ENCODE measurements at regions of chr3 and their contacts with region 1.

Region 1: DNA sequence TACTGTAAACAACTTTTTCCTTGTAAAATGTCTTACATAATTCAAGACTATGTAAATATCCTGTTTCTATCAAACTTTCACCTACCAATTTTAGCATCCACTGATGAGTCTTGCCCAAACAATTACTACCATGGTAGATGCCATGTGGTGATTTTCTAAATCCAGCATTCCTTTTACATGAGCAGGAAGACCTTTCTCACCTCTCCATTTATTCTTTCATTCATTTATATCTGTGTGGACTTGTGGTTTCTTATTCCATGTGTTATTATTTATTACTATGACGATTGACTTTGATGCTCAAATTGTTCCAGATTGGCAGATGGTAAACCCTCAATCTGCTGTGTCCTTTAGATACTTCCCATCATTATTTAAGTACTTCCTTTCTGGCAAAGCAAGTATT is 62.4 kb downstream of the IFT57 start:
- DNase-seq: peak; percentile 49
- H3K4me3 ChIP-seq: no peak overlapping the region
- H3K27ac ChIP-seq: no peak overlapping the region
- H3K4me1 ChIP-seq: peaks cover 26% of the 10 kb centered on the region
- H3K27me3 ChIP-seq: no peaks in the 10 kb centered on the region
- CTCF ChIP-seq: no peak
- POLR2A ChIP-seq: no peak

Region 2: GRCh38 chr3:108221911-108222852 is 62.3 kb after region 1 on chr3 and contains the start of gene IFT57:
- CTCF ChIA-PET with region 1: interaction called, 3 read pairs
- POLR2A ChIA-PET with region 1: no interaction called
- dilution Hi-C with region 1: no loop called
- intact Hi-C with region 1: loop called (anchors 1 kb)
- DNase-seq: peak; percentile 99
- H3K4me3 ChIP-seq: peak within 1 kb of the TSS; percentile 66 to 87 (median 82)
- H3K27ac ChIP-seq: peak within 1 kb of the TSS; percentile 68
- H3K4me1 ChIP-seq: peaks cover 21% of the 10 kb centered on the region
- H3K27me3 ChIP-seq: no peaks in the 10 kb centered on the region
- CTCF ChIP-seq: no peak
- POLR2A ChIP-seq: peak; percentile 36
- total RNA-seq, gene IFT57: 23.4 and 25.1 TPM in 2 replicates

Region 3: DNA sequence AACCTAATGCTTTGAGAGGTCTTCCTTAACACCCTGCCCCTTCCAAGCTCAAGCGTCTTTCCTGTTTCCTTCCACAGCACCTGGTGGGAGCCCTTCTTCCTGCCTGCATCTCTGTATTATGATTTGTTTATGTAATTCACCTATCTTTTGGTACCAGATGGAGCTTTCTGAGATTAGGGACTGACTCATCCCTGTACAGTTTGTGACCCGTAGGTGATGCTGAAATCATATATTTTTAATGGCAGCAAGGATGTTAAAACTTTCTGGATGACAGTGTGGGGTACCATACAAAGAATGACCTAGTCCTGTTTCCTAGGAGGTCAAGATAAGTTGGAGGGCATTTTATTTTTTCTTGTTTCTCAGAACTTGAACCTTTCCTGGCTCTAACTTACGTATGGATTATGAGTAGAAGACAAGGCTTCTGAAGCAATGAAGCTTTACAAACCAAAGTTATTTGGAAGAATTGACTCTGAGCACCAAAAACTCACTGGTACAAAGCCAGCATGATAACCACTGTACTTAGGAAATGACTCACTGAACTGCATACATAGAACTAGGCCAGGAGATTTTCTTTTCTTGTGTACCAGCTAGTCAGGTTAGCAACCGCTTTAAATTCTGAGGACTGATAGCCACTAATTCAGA is 183.1 kb after region 1 on chr3:
- CTCF ChIA-PET with region 1: no interaction called
- POLR2A ChIA-PET with region 1: no interaction called
- dilution Hi-C with region 1: no loop called
- intact Hi-C with region 1: loop called (anchors 5 kb)
- DNase-seq: peak; percentile 70
- H3K4me3 ChIP-seq: no peak overlapping the region
- H3K27ac ChIP-seq: peak overlapping the region; percentile 36
- H3K4me1 ChIP-seq: peaks cover 15% of the 10 kb centered on the region
- H3K27me3 ChIP-seq: no peaks in the 10 kb centered on the region
- CTCF ChIP-seq: no peak
- POLR2A ChIP-seq: no peak

Region 4: GRCh38 chr3:108406661-108407206 is 246.9 kb after region 1 on chr3:
- CTCF ChIA-PET with region 1: no interaction called
- POLR2A ChIA-PET with region 1: no interaction called
- dilution Hi-C with region 1: no loop called
- intact Hi-C with region 1: loop called (anchors 1 kb)
- DNase-seq: peak; percentile 60
- H3K4me3 ChIP-seq: no peak overlapping the region
- H3K27ac ChIP-seq: no peak overlapping the region
- H3K4me1 ChIP-seq: no peaks in the 10 kb centered on the region
- H3K27me3 ChIP-seq: no peaks in the 10 kb centered on the region
- CTCF ChIP-seq: peak; percentile 48 to 52
- POLR2A ChIP-seq: no peak